A549 (cell line): ENCODE measurements at regions of chr1 and their contacts with region 1.

Region 1: DNA sequence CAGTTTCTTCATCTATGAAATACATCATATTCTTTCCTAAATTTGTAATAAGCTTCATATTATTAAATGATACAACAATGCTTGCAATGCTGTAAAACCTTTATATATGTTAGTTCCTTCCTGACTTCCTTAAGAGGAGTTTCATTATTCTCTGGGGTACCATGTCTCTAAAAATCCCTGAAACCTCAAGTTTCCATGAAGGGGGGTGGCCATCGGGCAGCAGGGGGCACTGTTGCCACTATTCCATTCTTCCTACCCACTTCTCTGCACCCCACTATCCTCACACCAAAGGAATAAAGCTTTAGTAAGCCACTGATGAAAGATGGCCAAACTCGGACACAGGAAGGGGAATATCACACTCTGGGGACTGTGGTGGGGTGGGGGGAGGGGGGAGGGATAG is 9.0 kb upstream of the DMRTB1 start:
- DNase-seq: no peak
- ATAC-seq: no peak
- H3K4me3 ChIP-seq: no peak overlapping the region
- H3K27ac ChIP-seq: no peak overlapping the region
- H3K4me1 ChIP-seq: no peaks in the 10 kb centered on the region; the same call in 2 of the 3 replicates
- CTCF ChIP-seq: peak; percentile 36
- EP300 ChIP-seq: no peak
- POLR2A ChIP-seq: no peak
- RAD21 ChIP-seq: no peak

Region 2: DNA sequence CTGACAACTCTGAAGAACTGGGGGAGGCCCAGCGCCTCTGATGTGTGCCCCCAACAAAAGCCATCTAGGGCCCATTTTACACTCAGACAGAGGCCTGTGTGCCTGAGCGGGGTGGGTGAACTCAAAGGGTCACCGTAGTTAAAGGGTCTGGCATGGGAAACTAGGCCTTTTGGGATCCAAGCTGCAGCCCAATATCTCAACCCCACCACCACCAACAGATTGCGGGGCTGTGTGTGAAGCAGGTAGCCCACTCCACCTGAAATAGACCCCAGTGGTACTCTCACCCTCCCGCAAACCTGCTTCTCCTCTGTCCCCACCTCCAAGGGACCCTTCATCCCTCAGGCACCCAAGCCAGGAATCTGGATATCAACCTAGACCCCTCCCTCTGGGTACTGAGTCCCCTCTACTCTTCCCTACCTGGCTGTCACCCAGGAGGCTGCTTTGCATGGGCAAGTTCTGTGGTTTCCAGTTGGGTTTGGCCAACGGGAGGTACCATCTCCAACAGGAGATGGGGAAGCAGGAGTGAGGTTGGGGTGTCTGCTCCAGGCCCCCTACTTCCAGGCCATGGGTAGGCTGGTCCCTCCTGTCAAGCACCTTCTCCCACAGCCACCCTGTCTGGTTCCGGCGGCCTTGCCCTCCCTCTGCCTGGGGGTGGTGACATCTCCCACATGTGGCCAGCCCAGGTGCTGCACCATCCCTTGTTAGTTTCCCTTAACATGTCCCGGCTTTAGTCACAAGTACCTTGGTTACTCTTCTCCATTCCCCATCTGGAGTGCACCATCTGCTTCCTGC is 87.2 kb before region 1 on chr1:
- CTCF ChIA-PET with region 1: no interaction called
- POLR2A ChIA-PET with region 1: no interaction called
- DNase-seq: peak in 1 of 2 experiments; percentile 5
- ATAC-seq: peak in 1 of 2 experiments; percentile 64; a peak in 4 of 6 replicates
- H3K4me3 ChIP-seq: no peak overlapping the region
- H3K27ac ChIP-seq: no peak overlapping the region
- H3K4me1 ChIP-seq: no peaks in the 10 kb centered on the region
- CTCF ChIP-seq: no peak
- EP300 ChIP-seq: no peak
- POLR2A ChIP-seq: no peak
- RAD21 ChIP-seq: no peak

Region 3: DNA sequence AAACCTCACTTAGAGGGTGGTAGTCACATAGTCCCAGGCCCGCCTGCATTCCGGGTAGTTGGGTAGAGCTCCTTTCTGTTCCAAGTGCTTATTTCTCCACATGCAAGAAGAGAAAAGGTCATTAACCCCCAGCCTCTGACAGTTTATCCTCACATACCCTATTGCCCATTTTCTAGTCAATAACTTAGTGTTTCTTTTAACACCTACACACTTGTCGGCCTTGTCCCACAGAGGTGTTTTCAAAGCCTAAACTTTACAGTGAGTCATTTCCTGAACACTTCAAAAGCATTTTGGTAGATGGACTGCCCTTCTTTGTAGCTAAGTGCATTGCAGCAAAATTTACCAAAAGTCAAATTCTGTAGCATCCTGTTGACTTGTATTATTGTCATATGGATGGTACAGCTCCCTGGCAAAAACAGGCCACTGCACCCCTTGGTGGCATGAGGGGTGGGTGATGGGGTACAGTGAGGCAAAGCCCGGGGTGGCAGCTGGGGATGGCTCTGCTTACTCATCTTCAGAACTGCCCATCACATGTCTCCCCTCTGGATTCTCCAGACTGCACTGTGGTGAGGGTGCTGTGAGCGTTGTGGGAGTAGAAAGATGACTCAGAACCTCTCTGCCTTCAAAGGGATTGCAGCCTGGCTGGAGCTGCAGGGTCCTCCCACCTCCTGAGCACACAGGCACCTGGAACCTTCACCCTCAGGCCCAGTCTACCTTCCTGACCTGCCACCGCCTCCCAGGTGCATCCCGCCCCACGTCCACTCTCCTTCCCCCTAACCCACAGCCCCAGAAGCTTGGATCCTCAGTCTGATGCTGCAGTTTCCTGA is 36.8 kb before region 1 on chr1:
- CTCF ChIA-PET with region 1: no interaction called
- POLR2A ChIA-PET with region 1: no interaction called
- DNase-seq: peak in 1 of 2 experiments; percentile 37
- ATAC-seq: peak; percentile 89 to 94
- H3K4me3 ChIP-seq: no peak overlapping the region
- H3K27ac ChIP-seq: peak overlapping the region; percentile 49 to 85; a peak in 5 of 6 replicates
- H3K4me1 ChIP-seq: peaks cover 30% of the 10 kb centered on the region
- CTCF ChIP-seq: no peak
- EP300 ChIP-seq: no peak
- POLR2A ChIP-seq: no peak
- RAD21 ChIP-seq: no peak

Region 4: GRCh38 chr1:53465080-53465479 is 14.9 kb after region 1 on chr1:
- CTCF ChIA-PET with region 1: interaction called, 10 read pairs
- POLR2A ChIA-PET with region 1: no interaction called
- DNase-seq: no peak
- ATAC-seq: no peak
- H3K4me3 ChIP-seq: no peak overlapping the region
- H3K27ac ChIP-seq: no peak overlapping the region
- H3K4me1 ChIP-seq: no peaks in the 10 kb centered on the region
- CTCF ChIP-seq: no peak
- EP300 ChIP-seq: no peak
- POLR2A ChIP-seq: no peak
- RAD21 ChIP-seq: no peak

Region 5: GRCh38 chr1:53600561-53600960 is 150.3 kb after region 1 on chr1:
- CTCF ChIA-PET with region 1: no interaction called
- POLR2A ChIA-PET with region 1: no interaction called
- DNase-seq: no peak
- ATAC-seq: no peak; a peak in 1 of 6 replicates
- H3K4me3 ChIP-seq: no peak overlapping the region
- H3K27ac ChIP-seq: no peak overlapping the region
- H3K4me1 ChIP-seq: no peaks in the 10 kb centered on the region
- CTCF ChIP-seq: no peak
- EP300 ChIP-seq: no peak
- POLR2A ChIP-seq: no peak
- RAD21 ChIP-seq: no peak